ENCODE measurements at regions of chr9 and their contacts with region 1.

Region 1: GRCh38 chr9:131334629-131335367 is 45.3 kb downstream of the PLPP7 start:
- DNase-seq: peak; percentile 15
- CTCF ChIP-seq: no peak

Region 2: DNA sequence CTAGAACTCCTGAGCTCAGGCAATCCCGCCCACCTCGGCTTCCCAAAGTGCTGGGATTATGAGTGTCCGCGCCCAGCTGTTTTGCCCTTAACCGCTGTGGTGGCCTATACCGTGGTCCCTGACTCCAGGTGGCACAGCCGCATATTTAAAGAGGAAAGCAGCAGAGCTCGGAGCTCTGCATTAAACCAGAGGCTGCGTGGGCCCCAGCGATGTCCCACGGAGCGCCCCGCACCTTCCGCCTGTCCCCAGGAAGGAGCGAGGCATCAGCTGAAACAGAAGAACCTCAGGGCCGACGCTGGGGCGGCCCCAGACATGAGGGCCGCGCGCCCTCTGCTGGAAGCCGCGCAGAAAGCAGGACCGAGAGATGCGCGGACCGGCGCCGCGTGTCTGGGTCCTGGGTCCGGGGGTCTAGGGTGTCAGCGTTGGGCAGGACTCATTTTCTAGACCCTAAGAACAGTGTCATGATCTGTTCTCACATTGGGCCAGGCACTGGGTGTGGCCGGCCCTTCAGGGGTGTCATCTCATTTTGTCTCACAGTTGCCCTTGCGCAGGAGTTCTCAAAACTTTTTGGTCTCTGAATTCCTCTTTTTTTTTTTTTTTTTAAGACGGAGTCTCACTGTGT is 288.1 kb before region 1 on chr9:
- in situ Hi-C with region 1: loop called (anchors 10 kb)
- DNase-seq: peak; percentile 83
- CTCF ChIP-seq: peak; percentile 99

Region 3: GRCh38 chr9:131178382-131178781 is 156.4 kb before region 1 on chr9:
- in situ Hi-C with region 1: loop called (anchors 10 kb)
- DNase-seq: peak; percentile 76
- CTCF ChIP-seq: peak; percentile 97

Region 4: GRCh38 chr9:131227112-131227958 is 107.5 kb before region 1 on chr9:
- in situ Hi-C with region 1: no loop called
- DNase-seq: no peak
- CTCF ChIP-seq: no peak

Measured in GM13977 (cell line).